ENCODE measurements at regions of chr22 and their contacts with region 1.

Region 1: DNA sequence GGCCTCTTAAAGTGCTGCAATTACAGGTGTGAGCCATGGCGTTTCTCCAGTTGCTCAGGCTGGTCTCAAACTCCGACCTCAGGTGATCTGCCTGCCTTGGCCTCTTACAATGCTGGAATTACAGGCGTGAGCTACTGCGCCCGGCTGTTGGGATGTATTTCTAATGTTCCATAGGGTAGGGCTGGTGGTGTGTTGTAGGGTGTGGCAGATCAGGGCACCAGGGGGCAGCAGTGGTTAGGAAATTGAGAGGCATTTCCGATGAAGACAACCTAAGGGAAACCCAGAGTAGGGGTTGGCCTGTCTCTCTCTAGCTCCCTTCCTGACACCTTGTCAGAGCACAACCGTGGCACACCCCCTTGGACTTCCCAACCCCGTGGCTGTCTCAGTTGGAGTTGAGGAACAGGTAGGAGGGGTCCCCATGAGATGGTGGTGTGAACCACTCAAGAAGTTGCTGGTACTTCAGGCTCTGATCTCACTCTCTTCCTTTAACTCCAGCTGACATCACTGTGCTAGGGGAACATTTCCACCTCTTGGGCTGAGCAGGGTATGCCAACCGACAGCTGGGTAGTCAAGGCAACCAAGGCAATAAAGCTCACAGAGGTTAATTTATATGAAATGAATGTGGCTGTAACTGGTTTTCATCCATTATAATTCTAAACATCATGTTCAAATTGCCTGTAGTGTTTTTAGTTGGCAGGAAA is 33.0 kb downstream of the YWHAH start:
- DNase-seq: peak; percentile 62
- ATAC-seq: peak; percentile 92
- H3K4me3 ChIP-seq: no peak overlapping the region
- H3K27ac ChIP-seq: no peak overlapping the region
- H3K4me1 ChIP-seq: peaks cover 4% of the 10 kb centered on the region
- H3K27me3 ChIP-seq: peaks cover 0 to 7% of the 10 kb centered on the region in 2 experiments; a peak in 2 of 5 replicates
- CTCF ChIP-seq: peak; percentile 93
- EP300 ChIP-seq: no peak
- POLR2A ChIP-seq: no peak
- RAD21 ChIP-seq: peak; percentile 73

Region 2: GRCh38 chr22:32020117-32020516 is 42.8 kb after region 1 on chr22:
- CTCF ChIA-PET with region 1: no interaction called
- POLR2A ChIA-PET with region 1: no interaction called
- in situ Hi-C with region 1: no loop called
- intact Hi-C with region 1: no loop called
- DNase-seq: peak; percentile 5
- ATAC-seq: no peak
- H3K4me3 ChIP-seq: no peak overlapping the region
- H3K27ac ChIP-seq: no peak overlapping the region
- H3K4me1 ChIP-seq: no peaks in the 10 kb centered on the region
- H3K27me3 ChIP-seq: no peaks in the 10 kb centered on the region
- CTCF ChIP-seq: no peak
- EP300 ChIP-seq: no peak
- POLR2A ChIP-seq: no peak
- RAD21 ChIP-seq: no peak

Region 3: DNA sequence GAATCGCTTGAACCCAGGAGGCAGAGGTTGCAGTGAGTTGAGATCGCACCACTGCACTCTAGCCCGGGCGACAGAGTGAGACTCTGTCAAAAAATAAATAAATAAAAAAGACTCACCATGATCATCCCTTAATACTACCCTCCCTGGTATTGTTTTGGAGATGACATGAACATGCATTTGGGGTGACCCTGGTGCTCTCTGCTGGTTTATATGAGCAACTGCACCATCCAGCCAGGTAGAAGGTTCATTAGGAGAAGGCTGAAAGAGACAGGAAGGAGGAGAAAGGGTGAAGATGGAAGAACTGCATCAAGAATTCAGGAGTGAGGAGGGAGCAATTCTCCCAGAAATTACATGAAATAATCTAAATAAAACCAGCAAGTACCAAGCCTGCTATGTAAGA is 103.6 kb after region 1 on chr22:
- CTCF ChIA-PET with region 1: interaction called, 30 read pairs
- POLR2A ChIA-PET with region 1: no interaction called
- in situ Hi-C with region 1: loop called (anchors 5 kb)
- intact Hi-C with region 1: loop called (anchors 1 kb)
- DNase-seq: peak; percentile 47
- ATAC-seq: peak; percentile 62
- H3K4me3 ChIP-seq: no peak overlapping the region
- H3K27ac ChIP-seq: no peak overlapping the region
- H3K4me1 ChIP-seq: no peaks in the 10 kb centered on the region
- H3K27me3 ChIP-seq: peaks cover 0 to 3% of the 10 kb centered on the region in 2 experiments; a peak in 3 of 5 replicates
- CTCF ChIP-seq: peak; percentile 69
- EP300 ChIP-seq: no peak
- POLR2A ChIP-seq: no peak
- RAD21 ChIP-seq: peak; percentile 57

Measured in HepG2 (cell line).